ENCODE measurements at regions of chr10 and their contacts with region 1.

Region 1: DNA sequence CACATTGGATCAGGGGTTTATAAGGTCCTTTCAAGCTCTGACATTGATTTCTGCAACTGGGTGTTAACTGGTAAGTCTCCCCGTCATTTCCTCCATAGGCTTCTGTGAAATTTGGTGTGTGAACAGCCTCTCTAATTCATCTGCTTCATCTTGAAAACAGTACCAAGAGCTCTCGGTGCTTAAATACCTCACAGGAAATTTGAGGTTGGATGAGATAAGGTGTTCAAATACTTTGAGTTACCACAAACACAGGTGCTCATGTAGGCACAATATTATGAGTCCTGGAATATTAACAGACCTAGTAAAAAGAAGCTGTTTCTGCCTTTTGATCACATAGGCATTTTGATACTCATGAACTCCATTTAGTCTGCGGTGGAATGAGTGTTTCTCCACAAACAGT is 85.2 kb downstream of the RTKN2 start:
- DNase-seq: peak; percentile 90
- H3K4me3 Mint-ChIP-seq: peak overlapping the region; percentile 41
- H3K27ac Mint-ChIP-seq: peak overlapping the region; percentile 92
- H3K4me1 Mint-ChIP-seq: peaks cover 68% of the 10 kb centered on the region
- H3K27me3 Mint-ChIP-seq: no peaks in the 10 kb centered on the region

Region 2: DNA sequence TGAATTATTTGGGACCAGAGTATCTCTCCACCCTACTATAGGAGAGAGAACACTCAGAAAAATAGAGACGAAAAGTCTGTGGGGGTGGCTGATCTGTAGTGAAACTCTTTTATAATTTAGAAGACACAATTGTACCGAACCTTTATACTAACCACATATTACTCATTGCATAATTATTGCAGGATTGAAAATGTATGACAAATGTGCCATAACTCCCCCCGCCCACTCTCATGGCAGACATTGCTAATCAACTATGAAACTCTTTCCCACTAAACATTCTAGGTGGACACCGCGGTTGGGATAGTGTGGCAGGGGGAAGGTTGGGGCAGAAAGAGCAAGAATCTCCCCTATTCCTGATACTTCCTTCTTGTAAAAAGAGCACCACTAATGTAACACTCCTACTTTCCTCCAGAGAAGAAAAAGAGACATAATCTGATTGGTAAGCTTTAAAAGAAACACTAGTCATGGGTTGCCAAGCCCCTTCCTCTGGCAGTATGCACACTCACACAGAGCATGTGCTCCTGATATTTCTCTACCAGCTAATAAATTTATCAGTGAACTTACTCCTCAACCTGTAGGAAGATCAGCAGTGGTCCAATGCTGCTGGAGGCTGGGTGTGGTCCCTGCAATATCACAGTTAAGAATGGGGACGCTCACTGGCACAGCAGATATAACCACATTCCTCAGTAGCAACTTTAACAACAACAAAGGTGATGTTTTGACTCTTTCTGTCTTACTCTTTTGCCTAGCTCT is 300.6 kb before region 1 on chr10:
- intact Hi-C with region 1: loop called (anchors 1 kb)
- DNase-seq: no peak
- H3K4me3 Mint-ChIP-seq: peak overlapping the region; percentile 32
- H3K27ac Mint-ChIP-seq: peak overlapping the region; percentile 79
- H3K4me1 Mint-ChIP-seq: peaks cover 16% of the 10 kb centered on the region
- H3K27me3 Mint-ChIP-seq: peaks cover 2% of the 10 kb centered on the region

Region 3: GRCh38 chr10:61964949-61965702 is 218.3 kb before region 1 on chr10:
- intact Hi-C with region 1: loop called (anchors 1 kb)
- DNase-seq: no peak
- H3K4me3 Mint-ChIP-seq: no peak overlapping the region
- H3K27ac Mint-ChIP-seq: peak overlapping the region; percentile 48
- H3K4me1 Mint-ChIP-seq: peaks cover 75% of the 10 kb centered on the region
- H3K27me3 Mint-ChIP-seq: no peaks in the 10 kb centered on the region

Region 4: GRCh38 chr10:62121187-62121530 is 62.3 kb before region 1 on chr10:
- intact Hi-C with region 1: loop called (anchors 2 kb)
- DNase-seq: no peak
- H3K4me3 Mint-ChIP-seq: no peak overlapping the region
- H3K27ac Mint-ChIP-seq: peak overlapping the region; percentile 6
- H3K4me1 Mint-ChIP-seq: peaks cover 15% of the 10 kb centered on the region
- H3K27me3 Mint-ChIP-seq: no peaks in the 10 kb centered on the region

Region 5: GRCh38 chr10:62422068-62422590 is 238.7 kb after region 1 on chr10:
- intact Hi-C with region 1: loop called (anchors 5 kb)
- DNase-seq: no peak
- H3K4me3 Mint-ChIP-seq: no peak overlapping the region
- H3K27ac Mint-ChIP-seq: no peak overlapping the region
- H3K4me1 Mint-ChIP-seq: peaks cover 11% of the 10 kb centered on the region
- H3K27me3 Mint-ChIP-seq: peaks cover 10% of the 10 kb centered on the region

Region 6: DNA sequence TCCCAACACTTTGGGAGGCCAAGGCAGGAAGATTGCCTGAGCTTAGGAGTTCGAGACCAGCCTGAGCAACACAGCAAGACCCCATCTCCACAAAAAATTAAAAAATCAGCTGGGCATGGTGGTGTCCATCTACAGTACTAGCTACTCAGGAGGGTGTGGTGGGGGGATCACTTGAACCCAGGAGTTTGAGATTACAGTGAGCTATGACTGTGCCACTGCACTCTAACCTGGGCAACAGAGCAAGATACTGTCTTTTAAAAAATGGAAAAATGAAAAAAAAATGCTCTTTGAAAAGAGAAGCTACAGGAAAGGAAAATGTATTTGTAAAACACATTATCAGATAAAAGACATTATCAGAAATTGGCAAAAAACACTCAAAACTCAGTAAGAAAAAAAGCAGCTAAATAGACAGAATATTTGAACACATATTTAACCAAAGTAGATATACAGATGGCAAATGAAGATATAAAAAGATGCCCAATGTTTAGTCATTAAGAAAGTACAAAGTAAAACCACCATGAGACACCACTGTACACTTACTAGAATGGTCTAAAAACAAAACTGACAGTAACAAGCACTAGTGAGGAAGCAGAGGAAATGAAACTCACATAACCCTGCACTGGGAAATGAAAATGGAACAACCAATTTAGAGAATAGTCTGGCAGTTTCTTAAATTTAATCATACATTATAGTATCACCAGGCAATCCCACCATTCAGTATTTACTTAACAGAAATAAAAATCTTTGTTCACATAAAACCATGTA is 990.2 kb after region 1 on chr10:
- intact Hi-C with region 1: loop called (anchors 5 kb)
- DNase-seq: peak; percentile 72
- H3K4me3 Mint-ChIP-seq: peak overlapping the region; percentile 41
- H3K27ac Mint-ChIP-seq: peak overlapping the region; percentile 81
- H3K4me1 Mint-ChIP-seq: peaks cover 52% of the 10 kb centered on the region
- H3K27me3 Mint-ChIP-seq: no peaks in the 10 kb centered on the region

Measured in activated CD4-positive, alpha-beta T cell treated with anti-CD3 and anti-CD28 coated beads, Interleukin-2, amount 10 ng/mL, durations not matched to agents 24 days and 14 days (primary cell).